HEK293 (cell line): ENCODE measurements at regions of chr18 and their contacts with region 1.

Region 1: GRCh38 chr18:12391618-12392165 is 14.7 kb upstream of the AFG3L2 start:
- H3K4me3 ChIP-seq: no peak overlapping the region
- H3K27ac ChIP-seq: no peak overlapping the region
- H3K4me1 ChIP-seq: no peaks in the 10 kb centered on the region
- CTCF ChIP-seq: peak; percentile 73

Region 2: DNA sequence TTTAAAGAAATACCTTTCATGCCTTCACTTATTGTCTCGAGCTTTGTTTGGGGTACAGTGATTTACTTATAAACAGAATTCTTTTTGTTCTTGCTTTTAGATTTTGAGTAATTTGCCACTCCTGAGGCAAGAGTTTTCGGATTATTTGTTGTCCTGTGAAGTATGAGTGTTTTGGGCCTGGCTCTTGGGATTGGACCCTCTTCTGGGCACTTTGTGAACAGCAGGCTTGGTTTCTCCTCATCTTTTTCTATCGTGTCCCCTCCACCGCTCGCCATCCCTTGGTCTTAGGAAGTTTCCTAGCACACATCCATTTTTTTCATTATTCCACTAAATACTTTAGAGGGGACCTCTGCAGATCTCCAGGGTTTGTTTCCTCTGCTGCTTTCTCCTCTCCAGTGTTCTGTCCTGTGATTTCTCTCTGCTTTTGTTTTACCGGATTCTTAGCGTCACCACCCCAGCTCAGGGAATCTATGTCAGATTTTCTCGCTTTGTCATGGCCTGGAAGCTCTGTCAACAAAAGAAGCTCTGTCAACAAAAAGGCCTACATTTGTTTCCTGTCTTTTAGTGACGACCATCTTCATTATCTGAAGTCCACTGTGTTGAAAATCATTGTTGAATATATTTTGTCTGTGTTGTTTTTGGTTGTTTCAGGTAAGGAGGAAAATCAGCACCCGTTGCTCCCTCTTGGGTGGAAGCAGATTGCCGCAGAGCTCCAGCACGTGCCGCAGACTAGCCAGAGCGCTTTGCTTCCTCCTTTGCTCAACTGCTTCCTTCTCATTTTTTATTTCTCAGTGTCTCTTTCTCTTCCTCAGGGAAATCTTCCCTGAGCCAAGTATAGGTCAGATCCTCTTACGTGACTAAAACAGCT is 270.3 kb before region 1 on chr18:
- CTCF ChIA-PET with region 1: no interaction called
- POLR2A ChIA-PET with region 1: no interaction called
- H3K4me3 ChIP-seq: no peak overlapping the region
- H3K27ac ChIP-seq: no peak overlapping the region
- H3K4me1 ChIP-seq: no peaks in the 10 kb centered on the region
- CTCF ChIP-seq: peak; percentile 13; the same call in 1 of the 2 replicates

Region 3: GRCh38 chr18:12327510-12328178 is 64.0 kb before region 1 on chr18:
- CTCF ChIA-PET with region 1: interaction called, 18 read pairs
- POLR2A ChIA-PET with region 1: no interaction called
- H3K4me3 ChIP-seq: no peak overlapping the region
- H3K27ac ChIP-seq: no peak overlapping the region
- H3K4me1 ChIP-seq: no peaks in the 10 kb centered on the region; the same call in 1 of the 2 replicates
- CTCF ChIP-seq: peak; percentile 82

Region 4: DNA sequence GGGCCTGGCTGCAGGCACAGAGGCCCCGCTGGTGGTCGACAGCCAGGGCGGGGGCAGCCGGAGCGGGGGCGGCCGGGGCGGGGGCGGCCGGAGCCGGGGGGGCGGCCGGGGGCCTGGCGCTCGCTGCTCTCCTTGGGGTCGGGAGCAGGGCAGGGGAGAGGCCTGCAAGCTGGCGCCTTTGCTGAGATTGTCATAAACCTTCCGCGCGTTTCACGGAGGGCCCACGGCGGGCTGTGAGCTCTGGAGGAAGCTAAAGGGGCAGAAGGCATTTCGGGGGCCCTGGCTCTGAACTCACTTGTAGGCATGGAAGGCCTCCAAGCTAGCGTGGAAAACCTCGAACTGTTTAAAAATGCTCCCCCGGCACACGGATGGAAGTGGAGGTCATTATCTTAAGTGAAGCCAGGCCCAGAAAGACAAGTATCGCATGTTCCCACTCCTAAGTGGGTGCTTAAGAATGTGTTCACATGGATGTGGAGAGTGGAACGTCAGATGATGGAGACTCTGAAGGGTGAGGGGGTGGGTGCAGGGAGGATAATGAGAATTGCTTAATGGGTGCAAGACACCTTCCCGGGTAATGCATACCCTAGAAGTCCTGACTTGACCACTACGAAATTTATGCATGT is 16.7 kb after region 1 on chr18:
- CTCF ChIA-PET with region 1: interaction called, 65 read pairs
- POLR2A ChIA-PET with region 1: no interaction called
- H3K4me3 ChIP-seq: peak overlapping the region; percentile 52
- H3K27ac ChIP-seq: peak overlapping the region; percentile 94
- H3K4me1 ChIP-seq: peaks cover 14% of the 10 kb centered on the region
- CTCF ChIP-seq: no peak

Region 5: GRCh38 chr18:12460874-12461273 is 69.2 kb after region 1 on chr18:
- CTCF ChIA-PET with region 1: interaction called, 18 read pairs
- POLR2A ChIA-PET with region 1: no interaction called
- H3K4me3 ChIP-seq: no peak overlapping the region
- H3K27ac ChIP-seq: no peak overlapping the region
- H3K4me1 ChIP-seq: no peaks in the 10 kb centered on the region
- CTCF ChIP-seq: no peak

Region 6: DNA sequence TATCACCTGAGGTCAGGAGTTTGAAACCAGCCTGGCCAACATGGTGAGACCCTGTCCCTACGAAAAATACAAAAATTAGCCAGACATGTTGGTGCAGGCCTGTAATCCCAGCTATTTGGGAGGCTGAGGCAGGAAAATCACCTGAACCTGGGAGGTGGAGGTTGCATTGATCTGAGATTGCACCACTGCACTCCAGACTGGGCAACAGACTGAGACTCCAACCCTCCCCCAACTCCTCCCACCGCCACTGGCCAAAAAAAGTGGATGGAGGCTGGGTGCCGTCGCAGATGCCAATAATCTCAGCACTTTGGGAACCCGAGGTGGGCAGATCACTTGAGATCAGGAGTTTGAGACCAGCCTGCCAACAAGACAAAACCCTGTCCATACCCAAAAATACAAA is 276.3 kb after region 1 on chr18:
- CTCF ChIA-PET with region 1: interaction called, 118 read pairs
- POLR2A ChIA-PET with region 1: no interaction called
- H3K4me3 ChIP-seq: no peak overlapping the region
- H3K27ac ChIP-seq: no peak overlapping the region
- H3K4me1 ChIP-seq: no peaks in the 10 kb centered on the region
- CTCF ChIP-seq: no peak

Region 7: DNA sequence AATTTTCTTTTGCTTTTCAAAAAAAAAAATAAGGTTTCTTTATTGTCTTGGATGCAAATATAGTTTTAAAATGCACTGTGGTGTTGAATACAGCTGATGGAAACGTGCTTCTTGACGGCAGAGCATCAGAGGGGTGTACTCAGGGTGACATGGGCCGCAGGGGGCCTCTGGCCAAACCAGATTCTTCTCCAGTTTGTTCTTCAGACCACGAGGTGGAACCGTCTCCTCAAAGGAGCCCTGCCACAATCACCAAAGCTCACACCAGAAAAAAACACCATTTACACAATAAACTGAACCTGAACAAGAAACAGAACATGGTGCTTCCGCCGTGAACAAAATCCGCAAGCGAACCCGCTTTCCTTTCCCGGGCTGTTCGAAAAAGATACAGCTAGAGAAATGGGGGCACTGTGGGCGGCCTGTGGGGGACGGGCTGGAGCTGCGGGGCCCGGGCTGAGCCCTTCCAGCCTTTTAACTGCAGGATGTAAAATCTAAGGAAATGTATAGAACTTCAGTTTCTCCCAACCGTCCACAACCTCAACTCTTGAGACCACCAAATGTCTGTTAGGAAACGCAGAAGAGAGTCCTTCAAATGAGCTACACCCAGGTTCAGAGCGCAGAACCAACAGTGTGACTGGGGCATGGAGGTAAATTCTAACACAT is 345.7 kb after region 1 on chr18:
- CTCF ChIA-PET with region 1: no interaction called
- POLR2A ChIA-PET with region 1: no interaction called
- H3K4me3 ChIP-seq: no peak overlapping the region
- H3K27ac ChIP-seq: no peak overlapping the region
- H3K4me1 ChIP-seq: peaks cover 6% of the 10 kb centered on the region; the same call in 1 of the 2 replicates
- CTCF ChIP-seq: no peak